ENCODE measurements at regions of chr3 and their contacts with region 1.

Region 1: GRCh38 chr3:5057857-5058324 is 64.2 kb upstream of the ARL8B start:
- DNase-seq: peak; percentile 46
- H3K4me3 ChIP-seq: no peak overlapping the region; a peak in 1 of 4 replicates
- H3K27ac ChIP-seq: no peak overlapping the region
- H3K4me1 ChIP-seq: peaks cover 0 to 10% of the 10 kb centered on the region in 2 experiments; a peak in 1 of 4 replicates
- H3K27me3 ChIP-seq: no peaks in the 10 kb centered on the region
- CTCF ChIP-seq: peak; percentile 79
- EP300 ChIP-seq: no peak
- RAD21 ChIP-seq: peak; percentile 93

Region 2: GRCh38 chr3:4680881-4681300 is 377.0 kb before region 1 on chr3:
- CTCF ChIA-PET with region 1: interaction called, 10 read pairs
- POLR2A ChIA-PET with region 1: no interaction called
- DNase-seq: no peak
- H3K4me3 ChIP-seq: no peak overlapping the region
- H3K27ac ChIP-seq: no peak overlapping the region; a peak in 1 of 4 replicates
- H3K4me1 ChIP-seq: peaks cover 0 to 7% of the 10 kb centered on the region in 2 experiments; a peak in 1 of 4 replicates
- H3K27me3 ChIP-seq: no peaks in the 10 kb centered on the region
- CTCF ChIP-seq: no peak
- EP300 ChIP-seq: no peak
- RAD21 ChIP-seq: no peak

Region 3: GRCh38 chr3:4722103-4722502 is 335.8 kb before region 1 on chr3:
- CTCF ChIA-PET with region 1: interaction called, 213 read pairs
- POLR2A ChIA-PET with region 1: no interaction called
- DNase-seq: peak; percentile 37
- H3K4me3 ChIP-seq: no peak overlapping the region
- H3K27ac ChIP-seq: peak overlapping the region; percentile 66 to 94
- H3K4me1 ChIP-seq: peaks cover 28 to 36% of the 10 kb centered on the region in 2 experiments
- H3K27me3 ChIP-seq: no peaks in the 10 kb centered on the region
- CTCF ChIP-seq: peak; percentile 53
- EP300 ChIP-seq: no peak
- RAD21 ChIP-seq: peak; percentile 76

Region 4: DNA sequence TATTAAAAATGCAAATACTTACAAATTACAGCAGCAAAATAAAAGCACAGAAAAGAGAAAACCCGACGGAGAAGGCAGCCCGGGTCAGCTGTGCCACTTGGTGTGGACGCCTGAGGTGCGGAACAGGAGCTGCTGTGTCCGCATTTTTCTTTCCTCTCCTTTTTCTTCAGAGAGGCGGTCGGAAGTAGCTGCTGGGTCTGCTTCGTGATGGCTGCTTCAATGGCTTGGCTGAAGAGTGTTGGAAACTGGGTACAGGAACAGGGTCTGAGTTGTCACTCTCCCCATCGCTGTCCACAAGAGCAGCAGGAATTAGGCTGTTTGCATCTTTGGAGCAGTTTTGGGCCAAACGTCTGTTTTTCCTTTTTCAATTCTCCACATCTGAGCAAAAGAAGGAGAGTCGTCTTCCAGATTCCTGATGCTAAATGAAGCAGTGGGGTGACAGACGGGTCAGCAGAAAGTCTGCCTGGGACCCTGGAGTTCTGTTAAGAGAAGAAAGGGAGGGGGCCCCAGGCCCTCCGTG is 10.7 kb after region 1 on chr3:
- CTCF ChIA-PET with region 1: interaction called, 13 read pairs
- POLR2A ChIA-PET with region 1: no interaction called
- DNase-seq: no peak
- H3K4me3 ChIP-seq: no peak overlapping the region
- H3K27ac ChIP-seq: no peak overlapping the region
- H3K4me1 ChIP-seq: no peaks in the 10 kb centered on the region
- H3K27me3 ChIP-seq: peaks cover 2% of the 10 kb centered on the region; the same call in 1 of the 2 replicates
- CTCF ChIP-seq: no peak
- EP300 ChIP-seq: no peak
- RAD21 ChIP-seq: no peak

Region 5: DNA sequence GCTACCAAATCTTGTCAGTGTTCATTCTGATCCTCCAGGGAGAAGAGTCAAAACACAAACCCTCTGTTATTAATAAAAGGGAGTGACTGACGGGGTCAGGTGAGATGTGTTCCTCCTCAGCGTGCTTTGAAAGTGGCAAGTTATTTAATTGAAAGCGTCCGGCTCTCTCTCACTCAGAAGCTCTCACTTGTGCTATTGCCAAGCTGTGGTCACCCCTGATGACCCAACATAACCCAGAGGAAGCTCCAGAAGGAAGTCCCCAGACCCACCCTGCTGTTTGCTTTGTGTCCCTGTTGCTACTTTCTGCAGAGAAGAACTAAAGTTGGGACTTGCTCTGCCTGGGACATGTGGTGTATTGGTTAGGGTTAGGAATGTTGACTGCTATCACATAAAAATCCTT is 365.2 kb after region 1 on chr3:
- CTCF ChIA-PET with region 1: no interaction called
- POLR2A ChIA-PET with region 1: no interaction called
- DNase-seq: no peak
- H3K4me3 ChIP-seq: no peak overlapping the region
- H3K27ac ChIP-seq: no peak overlapping the region
- H3K4me1 ChIP-seq: peaks cover 0 to 2% of the 10 kb centered on the region in 2 experiments; a peak in 1 of 4 replicates
- H3K27me3 ChIP-seq: no peaks in the 10 kb centered on the region
- CTCF ChIP-seq: no peak
- EP300 ChIP-seq: no peak
- RAD21 ChIP-seq: no peak

Measured in SK-N-SH (cell line).